Left colon (tissue), 2 donors: ENCODE measurements at regions of chr2 and their contacts with region 1.

Region 1: GRCh38 chr2:222714361-222715241 is 43.1 kb downstream of the MOGAT1 start:
- DNase-seq: no peak
- ATAC-seq: peak; percentile 98

Region 2: GRCh38 chr2:222174450-222174849 is 540.2 kb before region 1 on chr2:
- intact Hi-C with region 1: no loop called
- DNase-seq: no peak
- ATAC-seq: no peak

Region 3: GRCh38 chr2:222904557-222905258 is 190.1 kb after region 1 on chr2:
- intact Hi-C with region 1: loop called in 1 of 2 experiments (anchors 5 kb)
- DNase-seq: no peak
- ATAC-seq: no peak

Region 4: GRCh38 chr2:222992137-222992536 is 277.5 kb after region 1 on chr2:
- intact Hi-C with region 1: no loop called
- DNase-seq: no peak
- ATAC-seq: no peak

Region 5: GRCh38 chr2:223185638-223186037 is 471.0 kb after region 1 on chr2:
- intact Hi-C with region 1: no loop called
- DNase-seq: no peak
- ATAC-seq: no peak